GM12878 (cell line): ENCODE measurements at regions of chr14 and their contacts with region 1.

Region 1: DNA sequence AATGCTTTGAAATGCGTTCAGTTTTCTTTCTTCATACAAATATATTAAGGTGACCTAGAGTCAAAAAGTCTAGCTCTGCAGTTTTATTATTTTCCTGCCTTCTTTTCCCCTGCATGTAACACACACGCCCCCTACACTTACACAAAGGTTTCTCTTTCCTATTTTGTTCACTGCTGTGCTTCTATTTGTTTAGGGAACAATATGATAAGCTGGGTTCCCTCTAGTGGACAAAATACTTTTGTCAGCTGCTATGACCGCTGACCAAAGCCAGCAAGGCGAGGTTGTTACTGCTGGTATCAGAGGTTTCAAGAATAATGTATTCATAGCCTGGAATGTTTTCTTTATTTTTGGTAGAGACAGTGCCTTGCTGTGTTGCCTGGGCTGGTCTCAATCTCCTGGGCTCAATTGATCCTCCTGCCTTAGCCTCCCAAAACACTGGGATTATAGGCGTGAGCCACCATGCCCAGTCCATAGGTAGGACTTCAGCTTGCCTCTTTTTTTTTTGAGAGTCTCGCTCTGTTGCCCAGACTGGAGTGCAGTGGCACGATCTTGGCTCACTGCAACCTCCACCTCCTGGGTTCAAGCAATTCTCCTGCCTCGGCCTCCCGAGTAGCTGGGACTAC is 33.4 kb downstream of the FNTB start:
- DNase-seq: no peak
- ATAC-seq: peak; percentile 91
- H3K4me3 ChIP-seq: no peak overlapping the region
- H3K27ac ChIP-seq: no peak overlapping the region
- H3K4me1 ChIP-seq: no peaks in the 10 kb centered on the region
- H3K27me3 ChIP-seq: no peaks in the 10 kb centered on the region
- CTCF ChIP-seq: peak; percentile 41 to 69 (median 68); a peak in 5 of 6 replicates
- EP300 ChIP-seq: no peak
- POLR2A ChIP-seq: no peak
- RAD21 ChIP-seq: peak; percentile 85

Region 2: GRCh38 chr14:64844272-64844671 is 175.8 kb before region 1 on chr14:
- CTCF ChIA-PET with region 1: no interaction called
- POLR2A ChIA-PET with region 1: no interaction called
- RAD21 ChIA-PET with region 1: no interaction called
- SMC1A ChIA-PET with region 1: no interaction called
- in situ Hi-C with region 1: no loop called
- intact Hi-C with region 1: no loop called
- DNase-seq: peak; percentile 35
- ATAC-seq: peak; percentile 92
- H3K4me3 ChIP-seq: no peak overlapping the region
- H3K27ac ChIP-seq: no peak overlapping the region
- H3K4me1 ChIP-seq: peaks cover 9% of the 10 kb centered on the region
- H3K27me3 ChIP-seq: no peaks in the 10 kb centered on the region; a peak in 1 of 4 replicates
- CTCF ChIP-seq: no peak
- EP300 ChIP-seq: no peak
- POLR2A ChIP-seq: no peak
- RAD21 ChIP-seq: no peak

Region 3: GRCh38 chr14:64997108-64997794 is 22.8 kb before region 1 on chr14:
- CTCF ChIA-PET with region 1: interaction called, 109 read pairs
- POLR2A ChIA-PET with region 1: no interaction called
- RAD21 ChIA-PET with region 1: interaction called, 5 read pairs
- SMC1A ChIA-PET with region 1: interaction called, 8 read pairs
- in situ Hi-C with region 1: no loop called
- intact Hi-C with region 1: no loop called
- DNase-seq: no peak
- ATAC-seq: peak; percentile 72
- H3K4me3 ChIP-seq: peak overlapping the region; percentile 47
- H3K27ac ChIP-seq: peak overlapping the region; percentile 74
- H3K4me1 ChIP-seq: peaks cover 29% of the 10 kb centered on the region
- H3K27me3 ChIP-seq: no peaks in the 10 kb centered on the region
- CTCF ChIP-seq: no peak
- EP300 ChIP-seq: no peak
- POLR2A ChIP-seq: no peak
- RAD21 ChIP-seq: no peak

Region 4: DNA sequence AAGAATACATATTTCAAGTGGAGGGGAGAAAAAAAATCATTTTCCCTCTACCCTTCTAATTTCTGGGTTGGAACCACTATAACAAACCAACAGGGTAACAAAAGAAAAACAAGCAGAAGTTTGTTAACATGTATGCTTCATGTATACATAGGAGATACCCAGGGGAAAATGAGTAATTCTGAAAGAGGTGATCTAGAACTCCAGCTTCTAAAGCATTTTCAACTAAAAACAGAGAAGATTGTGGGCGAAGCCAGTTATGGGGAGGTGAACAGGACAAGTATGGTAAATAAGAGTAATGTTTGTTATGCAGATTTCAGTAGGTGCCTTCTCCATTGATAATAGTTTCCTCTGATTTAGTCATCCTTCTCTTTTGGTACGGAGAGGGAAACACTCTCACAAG is 16.7 kb before region 1 on chr14:
- CTCF ChIA-PET with region 1: interaction called, 16 read pairs
- POLR2A ChIA-PET with region 1: no interaction called
- RAD21 ChIA-PET with region 1: interaction called, 6 read pairs
- SMC1A ChIA-PET with region 1: interaction called, 8 read pairs
- in situ Hi-C with region 1: no loop called
- intact Hi-C with region 1: no loop called
- DNase-seq: peak; percentile 55
- ATAC-seq: peak; percentile 85
- H3K4me3 ChIP-seq: 0 out of 2 replicates have a peak overlapping the region, but pooled peaks have one; percentile 19
- H3K27ac ChIP-seq: peak overlapping the region; percentile 59
- H3K4me1 ChIP-seq: peaks cover 28% of the 10 kb centered on the region
- H3K27me3 ChIP-seq: no peaks in the 10 kb centered on the region
- CTCF ChIP-seq: no peak
- EP300 ChIP-seq: 0 out of 4 replicates have a peak, but pooled peaks of 1 of the 2 experiments have one; percentile 30
- POLR2A ChIP-seq: no peak
- RAD21 ChIP-seq: 0 out of 2 replicates have a peak, but pooled peaks have one; percentile 8

Region 5: GRCh38 chr14:65035049-65035448 is 15.0 kb after region 1 on chr14:
- CTCF ChIA-PET with region 1: interaction called, 13 read pairs
- POLR2A ChIA-PET with region 1: no interaction called
- RAD21 ChIA-PET with region 1: interaction called, 3 read pairs
- SMC1A ChIA-PET with region 1: interaction called, 4 read pairs
- in situ Hi-C with region 1: no loop called
- intact Hi-C with region 1: no loop called
- DNase-seq: no peak
- ATAC-seq: no peak
- H3K4me3 ChIP-seq: no peak overlapping the region
- H3K27ac ChIP-seq: no peak overlapping the region
- H3K4me1 ChIP-seq: no peaks in the 10 kb centered on the region
- H3K27me3 ChIP-seq: no peaks in the 10 kb centered on the region
- CTCF ChIP-seq: no peak
- EP300 ChIP-seq: no peak
- POLR2A ChIP-seq: no peak
- RAD21 ChIP-seq: no peak